Activated CD4-positive, alpha-beta memory T cell treated with anti-CD3 and anti-CD28 coated beads for 36 hours (primary cell): ENCODE measurements at regions of chr17 and their contacts with region 1.

Region 1: DNA sequence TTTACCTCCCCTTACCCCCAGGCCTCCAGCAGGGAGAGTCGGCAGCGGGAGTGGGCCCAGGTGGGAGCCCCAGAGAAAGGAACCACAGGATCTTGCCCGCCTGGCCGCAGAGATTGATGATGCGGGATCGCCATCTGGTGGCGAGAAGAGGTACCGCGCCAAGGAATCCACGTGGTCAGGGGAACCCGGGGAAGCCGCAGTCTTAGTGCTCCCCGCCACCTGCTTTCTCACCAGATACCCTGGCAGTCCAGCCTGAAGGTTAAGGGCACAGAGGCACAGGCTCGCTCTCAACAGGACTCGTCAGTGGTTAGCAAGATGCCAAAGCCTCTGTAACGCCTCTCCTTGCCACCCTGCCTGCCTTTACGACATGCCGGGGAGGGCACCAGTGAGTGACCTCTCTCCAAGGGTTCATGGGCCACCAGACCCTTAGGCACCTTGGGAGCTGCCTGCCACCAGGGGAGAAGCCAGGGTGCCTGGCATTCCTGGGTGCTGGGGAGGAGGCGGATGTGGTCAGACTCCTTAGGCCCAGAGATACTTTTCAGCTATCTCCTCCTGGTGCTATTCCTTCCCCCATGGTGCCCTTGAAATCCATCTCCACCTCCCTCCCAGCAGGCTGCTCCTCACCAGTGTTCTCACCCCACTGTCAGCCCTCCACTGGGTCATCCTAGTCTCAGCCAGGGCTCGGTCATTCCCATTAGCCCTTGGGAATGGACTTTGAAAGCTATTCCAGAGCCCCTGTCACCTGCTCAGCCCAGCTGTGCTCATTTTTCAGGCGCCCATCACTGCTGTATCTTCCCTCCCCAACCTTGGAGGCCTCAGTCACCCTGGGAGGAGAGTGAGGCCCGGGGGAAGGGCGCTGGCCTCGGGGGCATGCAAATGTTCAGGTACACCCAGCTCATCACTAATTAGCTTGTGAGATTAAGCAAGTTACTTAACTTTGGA is 5.5 kb upstream of the RHBDF2 start:
- DNase-seq: peak; percentile 93
- H3K4me3 Mint-ChIP-seq: no peak overlapping the region
- H3K27ac Mint-ChIP-seq: no peak overlapping the region
- H3K4me1 Mint-ChIP-seq: peaks cover 12% of the 10 kb centered on the region
- H3K27me3 Mint-ChIP-seq: no peaks in the 10 kb centered on the region

Region 2: DNA sequence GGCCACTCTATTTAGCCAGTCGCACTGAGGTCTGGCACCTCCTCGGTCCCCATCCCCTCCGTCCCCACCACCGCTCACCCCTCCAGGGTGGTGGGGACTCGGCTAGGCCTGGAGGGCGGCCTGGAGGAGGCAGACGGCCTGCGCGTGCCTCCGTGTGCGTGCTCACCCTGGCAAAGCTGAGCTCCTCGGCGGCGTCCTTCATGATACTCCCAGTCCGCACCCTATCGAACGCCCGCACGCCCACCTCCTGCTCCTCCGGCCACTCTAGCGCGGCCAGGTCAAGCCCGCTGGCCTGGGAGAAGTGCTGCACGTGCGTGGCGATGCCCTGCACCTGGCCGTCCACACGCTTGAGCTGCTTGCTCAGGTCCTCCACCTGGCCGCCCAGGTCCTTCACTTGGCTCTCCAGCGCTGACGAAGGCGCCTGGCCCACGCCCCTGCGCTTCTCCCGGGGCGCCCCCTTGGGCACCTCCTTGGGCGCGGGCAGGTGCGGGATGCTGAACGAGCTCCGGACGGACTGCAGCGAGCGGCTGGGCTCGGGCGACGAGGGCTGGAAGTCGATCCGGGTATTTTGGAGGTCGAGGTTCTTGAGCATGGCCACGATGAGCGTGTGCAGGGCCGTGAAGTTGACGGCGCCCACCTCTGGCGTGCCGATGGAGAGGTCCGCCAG is 199.2 kb before region 1 on chr17:
- CTCF ChIA-PET with region 1: no interaction called
- POLR2A ChIA-PET with region 1: no interaction called
- intact Hi-C with region 1: loop called (anchors 2 kb)
- DNase-seq: no peak
- H3K4me3 Mint-ChIP-seq: no peak overlapping the region
- H3K27ac Mint-ChIP-seq: no peak overlapping the region
- H3K4me1 Mint-ChIP-seq: no peaks in the 10 kb centered on the region
- H3K27me3 Mint-ChIP-seq: no peaks in the 10 kb centered on the region

Region 3: DNA sequence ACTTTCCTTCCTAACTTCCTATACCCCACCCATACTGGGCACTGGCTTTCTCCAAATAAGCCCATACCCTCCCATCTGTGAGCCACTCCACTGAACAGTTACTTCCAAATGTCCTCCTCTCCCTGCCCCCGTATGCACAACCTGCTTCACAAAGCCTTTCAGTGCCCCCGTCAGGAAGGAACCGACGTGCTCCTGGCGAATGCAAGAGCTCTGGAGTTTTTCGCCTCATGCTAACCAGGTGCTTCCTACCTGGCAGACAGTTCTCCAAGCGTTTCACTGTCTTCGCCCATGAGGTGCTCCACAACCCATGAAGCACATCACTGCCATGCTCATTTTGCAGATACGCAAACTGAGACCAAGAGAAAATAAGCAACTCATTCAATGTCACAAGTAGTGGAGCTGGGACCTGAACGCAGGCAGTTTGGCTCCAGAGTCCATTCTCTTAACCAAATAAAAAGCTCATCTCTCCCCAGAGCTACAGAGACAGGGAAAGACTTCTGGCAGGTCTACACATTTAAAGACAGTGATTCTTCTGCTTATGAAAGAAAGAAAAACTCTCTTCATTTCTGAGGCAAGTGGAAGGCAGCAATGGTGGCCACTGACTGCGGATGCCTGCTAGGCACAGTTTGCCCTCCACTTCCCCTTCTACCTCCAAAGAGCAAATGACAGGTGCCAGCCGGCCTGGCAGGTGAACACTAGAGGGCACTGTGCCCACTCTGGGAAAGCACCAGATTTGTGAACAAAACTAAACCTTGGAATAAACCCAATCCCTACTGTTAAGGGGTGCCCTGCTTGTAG is 98.4 kb before region 1 on chr17:
- CTCF ChIA-PET with region 1: interaction called, 72 read pairs
- POLR2A ChIA-PET with region 1: no interaction called
- intact Hi-C with region 1: loop called (anchors 1 kb)
- DNase-seq: peak; percentile 82
- H3K4me3 Mint-ChIP-seq: no peak overlapping the region
- H3K27ac Mint-ChIP-seq: no peak overlapping the region
- H3K4me1 Mint-ChIP-seq: peaks cover 8% of the 10 kb centered on the region
- H3K27me3 Mint-ChIP-seq: no peaks in the 10 kb centered on the region

Region 4: DNA sequence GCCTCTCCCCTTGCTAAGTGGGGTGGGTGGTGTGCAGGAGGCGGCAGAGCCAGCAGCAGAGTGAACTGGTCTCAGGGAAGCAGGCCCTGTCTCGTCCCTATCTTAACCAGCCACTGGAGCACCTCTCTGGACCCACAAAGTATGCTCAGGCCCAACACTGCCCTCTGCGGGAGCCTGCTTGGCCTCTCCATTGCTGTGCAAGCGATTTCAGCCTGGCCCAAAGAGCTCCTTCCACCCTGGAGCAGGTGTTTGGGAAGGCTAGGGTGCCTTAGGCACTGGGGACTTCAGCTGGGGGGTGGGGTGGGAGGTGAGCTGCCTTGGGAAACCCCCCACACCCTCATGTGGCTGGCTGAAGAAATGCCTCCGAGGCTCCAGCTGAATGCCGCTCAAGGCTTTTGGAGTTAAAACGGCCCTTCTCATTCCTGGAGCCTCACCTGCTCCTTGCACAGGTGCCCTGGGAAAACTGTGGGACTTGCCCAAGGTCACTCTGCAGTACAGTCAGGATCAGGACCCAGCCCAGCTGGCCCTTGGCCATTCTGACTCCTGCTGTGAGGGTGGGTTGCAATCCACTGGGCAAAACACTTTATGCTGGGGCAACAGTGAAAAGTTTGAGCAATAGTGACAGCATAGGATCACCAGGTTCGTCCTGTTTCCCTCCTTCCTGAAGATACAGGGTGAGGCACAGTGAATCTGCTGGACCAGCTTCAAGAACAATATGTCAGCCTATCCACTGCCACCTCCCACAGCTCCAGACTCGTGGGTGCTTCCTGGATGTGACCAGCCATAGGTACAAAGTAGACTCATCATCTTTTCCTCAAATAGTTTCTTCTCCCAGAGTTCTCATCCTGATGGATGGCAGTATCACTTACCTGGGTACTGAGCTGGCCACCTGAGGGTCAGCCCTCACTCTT is 47.8 kb before region 1 on chr17:
- CTCF ChIA-PET with region 1: interaction called, 11 read pairs
- POLR2A ChIA-PET with region 1: interaction called, 3 read pairs
- intact Hi-C with region 1: loop called (anchors 5 kb)
- DNase-seq: peak; percentile 40
- H3K4me3 Mint-ChIP-seq: no peak overlapping the region
- H3K27ac Mint-ChIP-seq: no peak overlapping the region
- H3K4me1 Mint-ChIP-seq: no peaks in the 10 kb centered on the region
- H3K27me3 Mint-ChIP-seq: no peaks in the 10 kb centered on the region

Region 5: GRCh38 chr17:76467366-76467765 is 39.3 kb before region 1 on chr17 and contains the start of gene AANAT:
- CTCF ChIA-PET with region 1: interaction called, 95 read pairs
- POLR2A ChIA-PET with region 1: no interaction called
- intact Hi-C with region 1: loop called (anchors 1 kb)
- DNase-seq: no peak
- H3K4me3 Mint-ChIP-seq: no peak within 1 kb of the TSS
- H3K27ac Mint-ChIP-seq: no peak within 1 kb of the TSS
- H3K4me1 Mint-ChIP-seq: peaks cover 4% of the 10 kb centered on the region
- H3K27me3 Mint-ChIP-seq: no peaks in the 10 kb centered on the region
- total RNA-seq, gene AANAT: not detected

Region 6: GRCh38 chr17:76492989-76493501 is 13.6 kb before region 1 on chr17:
- CTCF ChIA-PET with region 1: interaction called, 17 read pairs
- POLR2A ChIA-PET with region 1: interaction called, 4 read pairs
- intact Hi-C with region 1: no loop called
- DNase-seq: peak; percentile 83
- H3K4me3 Mint-ChIP-seq: peak overlapping the region; percentile 35
- H3K27ac Mint-ChIP-seq: peak overlapping the region; percentile 79
- H3K4me1 Mint-ChIP-seq: peaks cover 42% of the 10 kb centered on the region
- H3K27me3 Mint-ChIP-seq: no peaks in the 10 kb centered on the region

Region 7: GRCh38 chr17:76612977-76613851 is 106.5 kb after region 1 on chr17:
- CTCF ChIA-PET with region 1: no interaction called
- POLR2A ChIA-PET with region 1: no interaction called
- intact Hi-C with region 1: no loop called
- DNase-seq: no peak
- H3K4me3 Mint-ChIP-seq: no peak overlapping the region
- H3K27ac Mint-ChIP-seq: no peak overlapping the region
- H3K4me1 Mint-ChIP-seq: no peaks in the 10 kb centered on the region
- H3K27me3 Mint-ChIP-seq: peaks cover 2% of the 10 kb centered on the region

Region 8: GRCh38 chr17:76710863-76711611 is 204.4 kb after region 1 on chr17 and contains the start of gene MXRA7:
- CTCF ChIA-PET with region 1: no interaction called
- POLR2A ChIA-PET with region 1: no interaction called
- intact Hi-C with region 1: no loop called
- DNase-seq: peak; percentile 71
- H3K4me3 Mint-ChIP-seq: peak within 1 kb of the TSS; percentile 62
- H3K27ac Mint-ChIP-seq: no peak within 1 kb of the TSS
- H3K4me1 Mint-ChIP-seq: peaks cover 20% of the 10 kb centered on the region
- H3K27me3 Mint-ChIP-seq: no peaks in the 10 kb centered on the region
- total RNA-seq, gene MXRA7: 7.5 to 8.0 TPM